ENCODE measurements at regions of chr1 and their contacts with region 1.

Region 1: GRCh38 chr1:87335175-87335884 is 6.7 kb downstream of the LMO4 start:
- DNase-seq: peak; percentile 35
- ATAC-seq: peak; percentile 33
- H3K4me3 ChIP-seq: peak overlapping the region; percentile 68
- H3K27ac ChIP-seq: peak overlapping the region; percentile 92
- H3K4me1 ChIP-seq: peaks cover 18% of the 10 kb centered on the region
- H3K27me3 ChIP-seq: no peaks in the 10 kb centered on the region
- CTCF ChIP-seq: peak; percentile 45
- POLR2A ChIP-seq: no peak
- RAD21 ChIP-seq: peak; percentile 43

Region 2: GRCh38 chr1:87523466-87523865 is 188.1 kb after region 1 on chr1:
- CTCF ChIA-PET with region 1: no interaction called
- POLR2A ChIA-PET with region 1: no interaction called
- dilution Hi-C with region 1: no loop called
- in situ Hi-C with region 1: no loop called
- intact Hi-C with region 1: loop called (anchors 5 kb)
- DNase-seq: peak; percentile 56
- ATAC-seq: peak; percentile 69
- H3K4me3 ChIP-seq: no peak overlapping the region
- H3K27ac ChIP-seq: peak overlapping the region; percentile 84
- H3K4me1 ChIP-seq: peaks cover 14% of the 10 kb centered on the region
- H3K27me3 ChIP-seq: no peaks in the 10 kb centered on the region; the same call in 1 of the 2 replicates
- CTCF ChIP-seq: no peak
- POLR2A ChIP-seq: no peak
- RAD21 ChIP-seq: no peak

Region 3: GRCh38 chr1:87588495-87588894 is 253.2 kb after region 1 on chr1:
- CTCF ChIA-PET with region 1: no interaction called
- POLR2A ChIA-PET with region 1: no interaction called
- dilution Hi-C with region 1: no loop called
- in situ Hi-C with region 1: no loop called
- intact Hi-C with region 1: loop called (anchors 10 kb)
- DNase-seq: peak; percentile 63
- ATAC-seq: peak; percentile 73
- H3K4me3 ChIP-seq: no peak overlapping the region
- H3K27ac ChIP-seq: peak overlapping the region; percentile 50; the same call in 1 of the 2 replicates
- H3K4me1 ChIP-seq: peaks cover 5% of the 10 kb centered on the region; the same call in 1 of the 2 replicates
- H3K27me3 ChIP-seq: peaks cover 2% of the 10 kb centered on the region; the same call in 1 of the 2 replicates
- CTCF ChIP-seq: no peak
- POLR2A ChIP-seq: no peak
- RAD21 ChIP-seq: no peak

Region 4: DNA sequence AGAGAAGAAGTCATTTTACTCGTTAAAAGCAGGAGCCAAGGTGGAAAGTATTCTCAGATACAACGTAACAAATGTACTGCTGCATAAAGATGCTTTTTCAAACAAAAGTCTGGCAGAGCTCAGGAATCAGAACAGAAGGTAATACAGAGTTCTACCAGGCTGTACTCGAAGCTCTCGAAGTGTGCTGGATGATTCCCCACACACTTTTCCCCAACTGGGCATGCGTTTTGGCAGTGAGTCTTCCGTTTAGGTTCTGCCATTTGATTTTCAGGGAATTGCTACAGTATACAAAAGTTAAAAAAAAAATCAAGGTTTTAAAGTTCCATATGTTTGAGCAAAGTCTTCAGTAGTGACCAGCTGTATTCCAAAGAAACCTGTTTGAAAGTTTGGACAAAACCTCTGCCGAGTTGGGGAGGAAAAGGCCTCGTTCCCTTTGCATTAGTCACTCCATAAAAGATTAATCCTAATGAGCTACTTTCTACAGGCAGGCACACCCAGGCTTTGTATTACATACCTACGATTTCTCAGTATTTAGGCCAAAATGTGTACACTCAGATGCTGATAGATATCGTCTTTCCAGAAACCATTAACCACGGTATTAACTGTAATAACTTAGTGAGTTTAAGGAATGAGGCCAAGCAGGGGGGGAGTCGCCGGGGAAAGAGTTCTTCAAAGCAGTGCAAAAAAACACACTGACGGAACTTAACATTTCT is 470.5 kb after region 1 on chr1:
- CTCF ChIA-PET with region 1: no interaction called
- POLR2A ChIA-PET with region 1: no interaction called
- dilution Hi-C with region 1: no loop called
- in situ Hi-C with region 1: no loop called
- intact Hi-C with region 1: no loop called
- DNase-seq: peak; percentile 74
- ATAC-seq: peak; percentile 90
- H3K4me3 ChIP-seq: no peak overlapping the region
- H3K27ac ChIP-seq: peak overlapping the region; percentile 77
- H3K4me1 ChIP-seq: peaks cover 8% of the 10 kb centered on the region
- H3K27me3 ChIP-seq: no peaks in the 10 kb centered on the region
- CTCF ChIP-seq: no peak
- POLR2A ChIP-seq: no peak
- RAD21 ChIP-seq: no peak

Region 5: DNA sequence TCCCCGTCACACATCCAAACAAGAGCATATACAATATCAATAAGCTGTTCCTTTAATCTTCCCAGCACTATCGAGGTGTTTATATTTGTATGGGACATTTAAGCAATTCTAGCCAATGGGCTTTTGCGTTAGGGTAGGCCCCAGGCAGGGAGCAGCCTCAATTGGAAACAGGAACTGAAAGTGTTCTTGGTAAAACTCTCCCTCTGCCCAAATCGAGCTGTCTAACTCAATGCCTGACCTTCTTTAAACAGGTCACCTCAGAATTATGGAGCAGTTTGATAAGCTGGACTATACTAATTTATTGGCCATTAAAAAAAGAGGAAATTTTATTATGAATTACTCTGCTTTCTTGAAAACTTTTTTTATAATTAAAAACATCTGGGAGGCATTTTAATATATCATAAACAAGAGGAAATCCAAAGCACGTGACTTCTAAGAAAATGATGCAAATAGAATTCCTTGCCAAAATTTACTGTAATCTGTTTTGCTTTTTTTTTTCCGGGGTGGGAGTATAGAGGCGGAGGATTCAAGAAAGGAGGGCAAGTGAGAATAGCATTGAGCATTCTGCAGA is 491.4 kb after region 1 on chr1:
- CTCF ChIA-PET with region 1: no interaction called
- POLR2A ChIA-PET with region 1: no interaction called
- dilution Hi-C with region 1: no loop called
- in situ Hi-C with region 1: no loop called
- intact Hi-C with region 1: loop called (anchors 5 kb)
- DNase-seq: peak; percentile 90
- ATAC-seq: peak; percentile 100
- H3K4me3 ChIP-seq: peak overlapping the region; percentile 51
- H3K27ac ChIP-seq: peak overlapping the region; percentile 85; the same call in 1 of the 2 replicates
- H3K4me1 ChIP-seq: no peaks in the 10 kb centered on the region
- H3K27me3 ChIP-seq: no peaks in the 10 kb centered on the region
- CTCF ChIP-seq: no peak
- POLR2A ChIP-seq: no peak
- RAD21 ChIP-seq: no peak